A549 (cell line): ENCODE measurements at regions of chr20 and their contacts with region 1.

Region 1: GRCh38 chr20:1776681-1777475 is 118.3 kb upstream of the SIRPA start:
- DNase-seq: peak; percentile 69 to 89
- ATAC-seq: peak; percentile 95 to 99
- H3K4me3 ChIP-seq: peak overlapping the region; percentile 79
- H3K27ac ChIP-seq: peak overlapping the region; percentile 80 to 91
- H3K4me1 ChIP-seq: peaks cover 20% of the 10 kb centered on the region
- CTCF ChIP-seq: peak; percentile 76
- EP300 ChIP-seq: no peak
- POLR2A ChIP-seq: peak; percentile 39; the same call in 1 of the 2 replicates
- RAD21 ChIP-seq: peak; percentile 71 to 82

Region 2: GRCh38 chr20:1466211-1467081 is 310.4 kb before region 1 on chr20 and contains the start of gene NSFL1C:
- CTCF ChIA-PET with region 1: interaction called, 12 read pairs
- POLR2A ChIA-PET with region 1: interaction called, 3 read pairs
- DNase-seq: peak; percentile 96 to 97
- ATAC-seq: peak; percentile 80 to 93
- H3K4me3 ChIP-seq: peak within 1 kb of the TSS; percentile 97
- H3K27ac ChIP-seq: peak within 1 kb of the TSS; percentile 95 to 97
- H3K4me1 ChIP-seq: peaks cover 37% of the 10 kb centered on the region
- CTCF ChIP-seq: peak; percentile 97
- EP300 ChIP-seq: no peak
- POLR2A ChIP-seq: peak; percentile 85
- RAD21 ChIP-seq: peak in 1 of 2 experiments; percentile 69; a peak in 4 of 5 replicates
- polyA plus RNA-seq, gene NSFL1C: 53.2 and 56.6 TPM in 2 replicates

Region 3: DNA sequence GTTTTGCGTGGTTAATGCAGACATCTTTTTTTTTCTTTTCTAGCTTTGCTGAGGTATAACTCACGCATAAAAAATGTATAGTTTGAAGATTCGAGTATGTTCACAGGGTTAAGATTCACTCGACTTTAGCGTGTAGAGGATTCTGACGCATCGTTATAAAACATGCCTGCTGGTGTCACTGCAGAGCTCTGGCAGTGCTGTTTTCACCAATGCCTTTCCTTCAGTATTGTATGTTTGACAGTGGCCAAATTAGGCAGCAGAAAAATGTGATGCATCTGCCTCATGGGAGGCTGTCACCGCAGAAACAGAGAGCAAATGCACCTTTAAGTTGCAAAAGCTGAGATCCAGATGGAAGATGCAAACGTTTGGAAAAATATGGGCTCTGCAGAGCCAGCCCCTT is 267.6 kb before region 1 on chr20:
- CTCF ChIA-PET with region 1: interaction called, 44 read pairs
- POLR2A ChIA-PET with region 1: interaction called, 3 read pairs
- DNase-seq: peak; percentile 26 to 39
- ATAC-seq: peak; percentile 89 to 92
- H3K4me3 ChIP-seq: no peak overlapping the region
- H3K27ac ChIP-seq: no peak overlapping the region
- H3K4me1 ChIP-seq: peaks cover 9% of the 10 kb centered on the region; the same call in 1 of the 3 replicates
- CTCF ChIP-seq: peak; percentile 56
- EP300 ChIP-seq: no peak
- POLR2A ChIP-seq: no peak
- RAD21 ChIP-seq: peak; percentile 56 to 65

Region 4: DNA sequence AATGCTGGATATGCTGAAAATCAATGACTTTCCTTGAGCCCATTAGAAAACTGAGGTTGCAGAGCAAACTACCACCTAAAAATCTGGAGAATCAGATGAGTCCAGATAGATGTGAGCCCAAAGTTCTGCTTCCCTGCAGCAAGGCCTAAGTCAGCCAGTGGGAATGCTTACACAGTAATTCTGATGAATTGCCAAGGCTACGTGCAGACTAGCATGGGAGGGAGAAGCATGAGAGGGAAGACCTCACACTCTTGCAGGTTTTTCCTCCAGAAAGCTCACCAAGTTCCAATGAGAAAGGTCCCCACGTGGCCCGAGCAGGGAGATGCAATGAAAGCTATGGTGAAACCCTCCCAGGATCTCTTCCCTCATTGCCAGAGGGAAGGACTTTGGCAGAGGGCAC is 13.5 kb after region 1 on chr20:
- CTCF ChIA-PET with region 1: interaction called, 20 read pairs
- POLR2A ChIA-PET with region 1: interaction called, 3 read pairs
- DNase-seq: no peak
- ATAC-seq: peak in 1 of 2 experiments; percentile 14; a peak in 2 of 6 replicates
- H3K4me3 ChIP-seq: no peak overlapping the region
- H3K27ac ChIP-seq: no peak overlapping the region
- H3K4me1 ChIP-seq: no peaks in the 10 kb centered on the region
- CTCF ChIP-seq: no peak
- EP300 ChIP-seq: no peak
- POLR2A ChIP-seq: no peak
- RAD21 ChIP-seq: no peak

Region 5: DNA sequence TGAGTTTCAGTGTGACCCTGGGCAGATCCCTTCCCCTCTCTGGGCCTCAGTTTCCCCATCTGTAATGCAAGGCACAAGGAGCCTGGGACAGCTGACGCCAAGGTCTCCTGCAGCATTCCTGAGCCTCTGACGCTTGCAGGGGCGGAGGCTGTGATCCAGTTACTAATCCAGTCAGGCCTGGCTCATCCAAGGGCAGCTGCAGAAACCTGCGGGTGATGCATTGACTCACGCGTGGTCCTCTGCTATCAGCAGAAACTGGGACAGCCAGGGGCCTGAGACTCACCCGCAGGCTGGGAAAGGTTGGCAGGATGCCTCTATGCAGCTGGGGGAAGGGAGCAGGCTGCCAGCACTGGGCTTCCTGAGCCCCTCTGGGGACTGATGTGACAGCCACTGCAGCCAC is 53.4 kb after region 1 on chr20:
- CTCF ChIA-PET with region 1: interaction called, 10 read pairs
- POLR2A ChIA-PET with region 1: no interaction called
- DNase-seq: peak; percentile 79 to 91
- ATAC-seq: peak; percentile 77 to 87
- H3K4me3 ChIP-seq: no peak overlapping the region
- H3K27ac ChIP-seq: peak overlapping the region; percentile 32 to 69; a peak in 4 of 6 replicates
- H3K4me1 ChIP-seq: peaks cover 36% of the 10 kb centered on the region
- CTCF ChIP-seq: no peak
- EP300 ChIP-seq: peak in 1 of 2 experiments; percentile 57; a peak in 1 of 5 replicates
- POLR2A ChIP-seq: no peak
- RAD21 ChIP-seq: peak in 1 of 2 experiments; percentile 7; a peak in 1 of 5 replicates

Region 6: DNA sequence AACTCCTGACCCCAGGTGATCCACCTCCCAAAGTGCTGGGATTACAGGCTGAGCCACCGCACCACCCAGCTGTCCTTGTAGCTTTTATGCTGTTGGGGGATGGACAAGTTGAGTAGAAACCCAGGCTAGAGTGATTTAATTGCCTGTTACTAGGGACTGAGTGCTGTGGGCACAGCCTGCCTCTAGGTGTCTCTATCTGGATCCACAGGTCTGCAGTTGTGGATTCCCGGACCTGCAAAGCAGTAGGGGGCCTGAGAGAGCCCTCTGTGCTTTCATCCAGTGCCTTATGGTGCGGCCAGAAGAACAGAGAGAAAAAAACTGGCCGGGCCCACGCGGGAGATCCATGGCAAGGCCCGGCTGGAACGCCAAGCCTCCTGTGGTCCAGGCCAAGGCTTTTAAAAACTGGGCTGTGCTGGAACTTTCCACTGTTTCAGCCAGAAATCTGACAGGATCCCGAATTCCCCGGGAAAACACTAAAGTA is 123.5 kb after region 1 on chr20:
- CTCF ChIA-PET with region 1: interaction called, 10 read pairs
- POLR2A ChIA-PET with region 1: no interaction called
- DNase-seq: peak; percentile 89 to 98
- ATAC-seq: peak; percentile 95 to 99
- H3K4me3 ChIP-seq: no peak overlapping the region
- H3K27ac ChIP-seq: peak overlapping the region in 1 of 2 experiments; percentile 56; a peak in 2 of 6 replicates
- H3K4me1 ChIP-seq: peaks cover 37% of the 10 kb centered on the region
- CTCF ChIP-seq: peak; percentile 80
- EP300 ChIP-seq: no peak
- POLR2A ChIP-seq: no peak
- RAD21 ChIP-seq: peak; percentile 67 to 69